Activated CD8-positive, alpha-beta T cell treated with anti-CD3 and anti-CD28 coated beads for 36 hours (primary cell): ENCODE measurements at regions of chr17 and their contacts with region 1.

Region 1: GRCh38 chr17:41688699-41689496 is at the start of gene EIF1:
- DNase-seq: peak; percentile 100
- ATAC-seq: peak; percentile 77
- H3K4me3 Mint-ChIP-seq: peak within 1 kb of the TSS; percentile 97
- H3K27ac Mint-ChIP-seq: peak within 1 kb of the TSS; percentile 93
- H3K4me1 Mint-ChIP-seq: peaks cover 26% of the 10 kb centered on the region
- H3K27me3 Mint-ChIP-seq: no peaks in the 10 kb centered on the region
- CTCF ChIP-seq: no peak
- total RNA-seq, gene EIF1: 924 to 930 TPM

Region 2: DNA sequence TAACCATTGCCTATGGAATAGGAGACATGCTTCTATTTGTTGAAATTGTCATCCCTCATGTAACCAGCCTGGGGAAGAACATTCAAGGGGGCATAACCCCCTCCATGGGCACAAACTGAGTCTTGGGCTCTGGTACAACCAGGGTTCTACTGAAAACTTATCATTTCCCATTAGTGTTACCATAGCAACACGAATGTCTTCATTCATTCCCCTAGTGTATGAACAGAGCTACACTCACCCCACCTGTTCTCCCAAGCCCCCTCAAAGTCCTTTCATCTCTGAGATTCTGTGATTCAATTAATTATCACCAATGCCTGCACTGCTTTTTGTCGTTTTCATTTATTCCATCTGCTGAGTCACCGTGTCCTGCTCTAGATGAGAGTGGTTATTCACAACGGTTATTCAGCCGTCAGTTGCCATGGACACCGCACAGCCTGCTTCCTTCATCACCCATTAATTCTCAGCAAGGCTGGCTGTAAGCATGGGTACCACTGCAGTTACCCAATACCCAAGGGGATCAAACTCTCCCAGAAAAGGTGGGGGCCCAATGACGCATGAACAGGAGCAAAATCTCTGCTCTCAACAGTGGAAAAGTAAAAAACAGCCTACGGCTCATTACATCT is 21.7 kb after region 1 on chr17:
- CTCF ChIA-PET with region 1: interaction called, 4 read pairs
- POLR2A ChIA-PET with region 1: interaction called, 88 read pairs
- intact Hi-C with region 1: no loop called
- DNase-seq: peak; percentile 65
- ATAC-seq: peak; percentile 67
- H3K4me3 Mint-ChIP-seq: no peak overlapping the region
- H3K27ac Mint-ChIP-seq: no peak overlapping the region
- H3K4me1 Mint-ChIP-seq: peaks cover 5% of the 10 kb centered on the region
- H3K27me3 Mint-ChIP-seq: peaks cover 5% of the 10 kb centered on the region
- CTCF ChIP-seq: no peak

Region 3: DNA sequence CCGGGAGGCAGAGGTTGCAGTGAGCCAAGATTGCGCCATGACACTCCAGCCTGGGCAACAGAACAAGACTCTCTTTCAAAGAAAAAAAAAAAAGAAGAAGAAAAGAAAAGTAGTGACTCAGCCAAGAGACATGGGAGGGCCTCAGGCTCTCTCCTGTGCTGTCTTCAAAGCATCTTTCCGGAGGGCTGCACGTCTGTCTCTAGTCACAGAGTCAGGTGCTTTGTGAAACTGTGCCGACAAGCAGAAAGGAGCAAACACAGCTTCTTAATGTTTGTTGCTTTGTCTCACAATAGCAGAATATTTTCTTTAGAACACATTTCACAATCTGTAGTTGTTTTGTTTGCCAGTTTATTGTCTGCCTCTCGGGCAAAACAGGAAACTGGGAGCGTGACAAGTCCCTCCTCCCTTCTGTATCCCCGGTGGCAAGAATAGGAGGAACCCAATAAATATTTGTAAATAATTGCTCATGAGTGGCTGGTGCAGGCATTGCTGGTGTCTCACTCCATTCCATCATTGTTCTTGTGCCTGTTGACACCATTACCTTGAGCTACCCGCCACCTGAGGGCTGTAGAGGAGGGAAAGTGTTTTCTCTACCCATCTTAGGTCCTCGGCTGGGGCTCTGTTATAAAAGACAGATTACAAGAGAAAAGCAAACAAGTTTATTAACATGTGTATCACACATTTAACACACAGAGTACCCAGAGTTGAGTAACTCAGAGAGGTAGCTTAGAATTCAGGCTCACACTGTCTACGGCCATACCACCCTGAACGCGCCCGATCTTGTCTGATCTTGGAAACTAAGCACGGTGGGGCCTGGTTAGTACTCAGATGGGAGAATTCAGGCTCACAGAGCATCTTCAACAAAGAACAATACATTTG is 28.7 kb after region 1 on chr17:
- CTCF ChIA-PET with region 1: interaction called, 3 read pairs
- POLR2A ChIA-PET with region 1: interaction called, 13 read pairs
- intact Hi-C with region 1: no loop called
- DNase-seq: peak; percentile 33
- ATAC-seq: peak; percentile 84
- H3K4me3 Mint-ChIP-seq: no peak overlapping the region
- H3K27ac Mint-ChIP-seq: no peak overlapping the region
- H3K4me1 Mint-ChIP-seq: peaks cover 8% of the 10 kb centered on the region
- H3K27me3 Mint-ChIP-seq: peaks cover 5% of the 10 kb centered on the region
- CTCF ChIP-seq: no peak

Region 4: DNA sequence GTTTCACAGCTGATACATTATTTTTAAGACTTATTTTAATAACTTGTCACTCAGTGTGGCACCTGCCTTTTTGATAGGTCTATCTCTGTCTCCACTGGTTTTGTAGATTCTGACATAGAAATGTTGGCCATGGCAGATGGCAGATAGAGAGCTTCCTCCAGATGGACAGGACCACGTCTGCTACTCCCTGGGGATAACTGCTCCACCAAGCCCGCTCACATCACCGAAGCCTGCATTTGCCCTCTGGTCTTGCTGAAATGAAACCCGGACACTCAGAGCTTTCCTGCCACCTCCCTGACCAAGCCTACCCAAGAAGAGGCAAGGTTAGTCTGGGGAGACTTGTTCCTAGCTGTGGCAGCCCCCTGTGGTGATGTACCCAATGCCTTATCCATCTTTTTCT is 62.0 kb after region 1 on chr17:
- CTCF ChIA-PET with region 1: no interaction called
- POLR2A ChIA-PET with region 1: no interaction called
- intact Hi-C with region 1: no loop called
- DNase-seq: no peak
- ATAC-seq: no peak
- H3K4me3 Mint-ChIP-seq: no peak overlapping the region
- H3K27ac Mint-ChIP-seq: no peak overlapping the region
- H3K4me1 Mint-ChIP-seq: no peaks in the 10 kb centered on the region
- H3K27me3 Mint-ChIP-seq: no peaks in the 10 kb centered on the region
- CTCF ChIP-seq: no peak

Region 5: GRCh38 chr17:41901646-41902045 is 212.7 kb after region 1 on chr17:
- CTCF ChIA-PET with region 1: no interaction called
- POLR2A ChIA-PET with region 1: no interaction called
- intact Hi-C with region 1: no loop called
- DNase-seq: no peak
- ATAC-seq: no peak
- H3K4me3 Mint-ChIP-seq: no peak overlapping the region
- H3K27ac Mint-ChIP-seq: no peak overlapping the region
- H3K4me1 Mint-ChIP-seq: no peaks in the 10 kb centered on the region
- H3K27me3 Mint-ChIP-seq: no peaks in the 10 kb centered on the region
- CTCF ChIP-seq: no peak

Region 6: DNA sequence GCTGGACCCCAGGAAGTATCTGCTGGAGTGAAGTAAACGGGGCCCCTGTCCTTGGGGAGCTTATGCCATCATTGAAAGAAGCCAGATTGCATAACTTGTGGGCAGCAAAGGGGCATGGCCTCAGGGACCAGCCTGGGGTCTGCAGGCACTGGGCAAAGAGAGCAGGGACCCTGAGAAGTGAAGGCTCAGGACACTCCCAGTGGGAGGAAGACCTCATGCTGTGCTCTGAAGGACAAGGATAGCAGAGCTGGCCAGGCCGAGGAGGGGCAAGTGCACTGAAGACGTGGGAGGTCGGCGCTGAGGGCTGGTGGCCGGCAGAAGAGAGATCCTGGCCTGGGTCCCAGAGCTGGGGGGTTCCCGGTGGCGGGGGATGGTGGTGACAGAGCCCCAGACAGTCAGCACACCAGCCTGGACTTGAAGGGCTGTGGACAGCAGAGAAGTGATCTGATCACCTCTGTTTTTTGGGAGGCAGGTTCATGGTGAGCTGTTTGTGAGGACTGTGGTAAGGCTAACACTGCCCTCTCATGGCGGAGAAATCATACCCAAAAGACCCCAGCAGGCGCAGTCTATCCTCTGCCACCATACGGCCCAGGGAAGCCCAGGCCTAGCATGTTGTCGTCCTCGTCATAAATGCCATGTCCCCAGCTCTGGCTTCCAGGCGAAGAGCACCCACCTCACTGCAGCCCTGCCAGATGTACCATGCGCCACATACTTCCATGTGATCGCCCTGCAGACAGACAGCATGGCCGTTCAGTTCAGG is 270.6 kb after region 1 on chr17:
- CTCF ChIA-PET with region 1: no interaction called
- POLR2A ChIA-PET with region 1: no interaction called
- intact Hi-C with region 1: no loop called
- DNase-seq: peak; percentile 24
- ATAC-seq: no peak
- H3K4me3 Mint-ChIP-seq: no peak overlapping the region
- H3K27ac Mint-ChIP-seq: no peak overlapping the region
- H3K4me1 Mint-ChIP-seq: no peaks in the 10 kb centered on the region
- H3K27me3 Mint-ChIP-seq: no peaks in the 10 kb centered on the region
- CTCF ChIP-seq: no peak